Activated CD4-positive, alpha-beta T cell treated with anti-CD3 and anti-CD28 coated beads for 36 hours (primary cell): ENCODE measurements at regions of chr1 and their contacts with region 1.

Region 1: GRCh38 chr1:40040511-40041465 is at the start of gene CAP1:
- DNase-seq: peak; percentile 100
- ATAC-seq: peak; percentile 93
- H3K4me3 Mint-ChIP-seq: peak within 1 kb of the TSS; percentile 99
- H3K27ac Mint-ChIP-seq: peak within 1 kb of the TSS; percentile 99
- H3K4me1 Mint-ChIP-seq: peaks cover 58% of the 10 kb centered on the region
- H3K27me3 Mint-ChIP-seq: no peaks in the 10 kb centered on the region
- total RNA-seq, gene CAP1: 527 to 553 TPM

Region 2: GRCh38 chr1:39738622-39739366 is 302.0 kb before region 1 on chr1 and contains the start of gene PPIE:
- CTCF ChIA-PET with region 1: no interaction called
- POLR2A ChIA-PET with region 1: no interaction called
- intact Hi-C with region 1: loop called in 1 of 2 experiments (anchors 1 kb)
- DNase-seq: peak; percentile 99
- ATAC-seq: peak; percentile 98
- H3K4me3 Mint-ChIP-seq: peak within 1 kb of the TSS; percentile 96
- H3K27ac Mint-ChIP-seq: peak within 1 kb of the TSS; percentile 94
- H3K4me1 Mint-ChIP-seq: peaks cover 36% of the 10 kb centered on the region
- H3K27me3 Mint-ChIP-seq: peaks cover 7% of the 10 kb centered on the region
- total RNA-seq, gene PPIE: 55.3 to 70.4 TPM

Region 3: DNA sequence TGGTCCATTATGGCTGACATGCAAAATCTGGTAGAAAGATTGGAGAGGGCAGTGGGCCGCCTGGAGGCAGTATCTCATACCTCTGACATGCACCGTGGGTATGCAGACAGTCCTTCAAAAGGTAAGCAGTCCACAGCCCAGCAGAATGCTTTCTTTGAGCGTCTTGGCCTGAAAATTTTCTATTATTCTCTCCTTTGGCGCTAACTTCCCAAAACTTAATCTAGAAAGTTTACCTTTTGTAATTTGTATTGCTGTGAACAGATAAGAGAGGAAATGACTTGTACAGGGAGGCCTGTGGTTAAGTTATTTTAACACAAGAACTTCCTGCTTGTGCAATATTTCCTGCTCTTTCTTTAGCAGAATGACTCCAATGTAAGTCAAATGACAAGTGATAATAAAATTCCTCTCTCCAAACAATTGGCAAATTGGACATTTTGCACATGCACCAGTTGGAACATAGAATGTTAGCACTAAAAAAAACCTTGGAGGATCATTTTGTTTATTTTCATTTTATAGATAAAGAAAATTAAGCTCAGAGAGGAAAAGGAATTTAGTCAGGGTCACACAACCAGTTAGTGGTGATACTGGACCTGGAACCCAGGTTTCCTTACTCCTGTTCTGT is 18.7 kb after region 1 on chr1:
- CTCF ChIA-PET with region 1: interaction called, 6 read pairs
- POLR2A ChIA-PET with region 1: interaction called, 6 read pairs
- intact Hi-C with region 1: loop called in 1 of 2 experiments (anchors 1 kb)
- DNase-seq: peak; percentile 46
- ATAC-seq: peak; percentile 54
- H3K4me3 Mint-ChIP-seq: peak overlapping the region; percentile 60
- H3K27ac Mint-ChIP-seq: peak overlapping the region; percentile 90
- H3K4me1 Mint-ChIP-seq: peaks cover 88% of the 10 kb centered on the region
- H3K27me3 Mint-ChIP-seq: no peaks in the 10 kb centered on the region

Region 4: GRCh38 chr1:40140211-40140973 is 99.6 kb after region 1 on chr1:
- CTCF ChIA-PET with region 1: no interaction called
- POLR2A ChIA-PET with region 1: no interaction called
- intact Hi-C with region 1: no loop called
- DNase-seq: no peak
- ATAC-seq: no peak
- H3K4me3 Mint-ChIP-seq: no peak overlapping the region
- H3K27ac Mint-ChIP-seq: no peak overlapping the region
- H3K4me1 Mint-ChIP-seq: peaks cover 3% of the 10 kb centered on the region
- H3K27me3 Mint-ChIP-seq: peaks cover 9% of the 10 kb centered on the region

Region 5: DNA sequence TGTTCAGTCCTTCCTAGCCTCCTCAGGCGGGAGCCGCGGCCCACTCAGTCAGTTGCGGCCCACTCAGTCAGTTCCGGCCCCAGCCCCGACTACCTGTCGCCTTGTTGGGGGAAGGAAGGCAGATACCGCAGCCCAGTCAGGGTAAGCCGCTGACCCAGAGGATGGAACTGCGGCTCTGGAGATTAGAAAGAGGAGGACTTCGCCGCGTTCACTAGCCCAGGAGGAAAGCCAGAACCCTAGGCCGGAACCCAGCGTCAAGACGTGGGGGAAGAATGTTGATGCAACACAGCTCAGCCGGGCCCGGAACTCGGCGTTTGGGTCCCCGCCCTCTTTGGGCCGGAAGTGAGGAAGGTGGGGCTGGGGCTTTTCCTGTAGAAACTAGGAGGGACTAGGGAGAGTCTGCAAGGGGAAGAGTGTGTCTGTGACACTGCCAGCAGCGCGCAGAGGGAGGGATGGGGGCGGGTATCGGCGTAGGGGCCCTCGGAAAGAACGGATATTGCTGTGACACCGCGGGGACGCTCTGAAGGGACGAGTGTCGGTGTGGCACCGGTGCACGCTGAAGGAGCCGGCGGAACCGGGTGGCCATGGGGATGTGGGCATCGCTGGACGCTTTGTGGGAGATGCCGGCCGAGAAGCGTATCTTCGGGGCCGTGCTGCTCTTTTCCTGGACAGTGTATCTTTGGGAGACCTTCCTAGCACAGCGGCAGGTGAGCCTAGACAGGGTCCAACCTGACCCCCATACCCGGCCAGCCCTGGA is 217.1 kb after region 1 on chr1 and contains the start of gene ZMPSTE24:
- CTCF ChIA-PET with region 1: no interaction called
- POLR2A ChIA-PET with region 1: interaction called, 3 read pairs
- intact Hi-C with region 1: loop called (anchors 1 kb)
- DNase-seq: peak; percentile 98
- ATAC-seq: peak; percentile 97
- H3K4me3 Mint-ChIP-seq: peak within 1 kb of the TSS; percentile 99
- H3K27ac Mint-ChIP-seq: peak within 1 kb of the TSS; percentile 100
- H3K4me1 Mint-ChIP-seq: peaks cover 47% of the 10 kb centered on the region
- H3K27me3 Mint-ChIP-seq: no peaks in the 10 kb centered on the region
- total RNA-seq, gene ZMPSTE24: 20.7 to 23.0 TPM

Region 6: DNA sequence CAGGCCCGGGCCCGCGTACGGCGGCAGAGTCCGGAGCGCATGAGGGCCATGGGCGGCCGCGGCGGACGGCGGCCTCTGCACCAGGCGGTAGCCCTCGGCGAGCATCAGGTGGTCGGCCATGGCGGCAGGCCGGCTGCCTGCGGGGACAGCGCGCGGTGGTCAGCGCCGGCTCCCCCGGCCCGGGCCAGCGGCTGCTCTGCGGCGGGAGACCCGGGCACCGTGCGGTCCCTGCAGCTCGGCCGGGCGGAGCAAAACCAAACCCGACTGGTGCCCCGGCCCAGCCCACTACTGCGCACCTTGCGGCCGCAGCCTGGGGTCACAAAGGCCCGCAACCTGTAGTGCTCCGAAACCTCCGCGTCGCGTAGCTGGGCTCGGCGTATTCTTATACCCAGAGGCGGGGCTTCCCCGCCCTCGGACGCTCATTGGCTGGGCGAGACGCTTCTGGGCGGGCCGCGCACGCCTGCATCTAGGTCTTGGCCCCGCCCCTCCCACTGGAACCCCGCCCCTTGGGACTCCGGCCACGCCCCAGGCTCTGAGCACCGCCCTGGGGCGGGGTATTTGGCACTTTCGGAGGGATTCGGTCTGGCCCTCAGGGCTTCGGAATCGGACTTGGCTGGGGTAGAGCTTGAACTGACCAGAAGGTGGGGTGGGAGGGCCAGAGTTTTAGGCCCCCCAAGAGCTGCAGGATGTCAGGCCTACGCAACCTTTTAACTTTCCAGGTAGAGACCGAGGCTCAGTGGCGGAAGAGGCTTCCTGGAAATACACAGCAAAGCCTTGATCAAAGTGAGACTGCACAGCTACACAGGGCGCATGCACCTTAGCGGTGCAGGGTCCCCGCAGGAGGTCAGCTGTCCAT is 821.4 kb after region 1 on chr1 and contains the start of gene CITED4:
- CTCF ChIA-PET with region 1: no interaction called
- POLR2A ChIA-PET with region 1: no interaction called
- intact Hi-C with region 1: loop called in 1 of 2 experiments (anchors 1 kb)
- DNase-seq: peak; percentile 97
- ATAC-seq: peak; percentile 98
- H3K4me3 Mint-ChIP-seq: peak within 1 kb of the TSS; percentile 84
- H3K27ac Mint-ChIP-seq: peak within 1 kb of the TSS; percentile 96
- H3K4me1 Mint-ChIP-seq: peaks cover 11% of the 10 kb centered on the region
- H3K27me3 Mint-ChIP-seq: peaks cover 11% of the 10 kb centered on the region
- total RNA-seq, gene CITED4: 1.6 to 3.0 TPM